ENCODE measurements at regions of chr17 and their contacts with region 1.

Region 1: GRCh38 chr17:80454557-80455335 is 21.7 kb downstream of the NPTX1 start:
- DNase-seq: peak; percentile 92 to 100 (median 96)

Region 2: GRCh38 chr17:80414803-80415625 is 39.7 kb before region 1 on chr17 and contains the start of gene ENDOV:
- intact Hi-C with region 1: loop called (anchors 2 kb)
- DNase-seq: peak; percentile 90 to 99 (median 95)

Region 3: GRCh38 chr17:80544655-80545498 is 90.1 kb after region 1 on chr17 and contains the start of gene RPTOR:
- intact Hi-C with region 1: loop called (anchors 10 kb)
- DNase-seq: peak; percentile 88 to 100 (median 96)

Region 4: GRCh38 chr17:80637048-80637781 is 182.5 kb after region 1 on chr17:
- intact Hi-C with region 1: no loop called
- DNase-seq: no peak